ENCODE measurements at regions of chr4 and their contacts with region 1.

Region 1: DNA sequence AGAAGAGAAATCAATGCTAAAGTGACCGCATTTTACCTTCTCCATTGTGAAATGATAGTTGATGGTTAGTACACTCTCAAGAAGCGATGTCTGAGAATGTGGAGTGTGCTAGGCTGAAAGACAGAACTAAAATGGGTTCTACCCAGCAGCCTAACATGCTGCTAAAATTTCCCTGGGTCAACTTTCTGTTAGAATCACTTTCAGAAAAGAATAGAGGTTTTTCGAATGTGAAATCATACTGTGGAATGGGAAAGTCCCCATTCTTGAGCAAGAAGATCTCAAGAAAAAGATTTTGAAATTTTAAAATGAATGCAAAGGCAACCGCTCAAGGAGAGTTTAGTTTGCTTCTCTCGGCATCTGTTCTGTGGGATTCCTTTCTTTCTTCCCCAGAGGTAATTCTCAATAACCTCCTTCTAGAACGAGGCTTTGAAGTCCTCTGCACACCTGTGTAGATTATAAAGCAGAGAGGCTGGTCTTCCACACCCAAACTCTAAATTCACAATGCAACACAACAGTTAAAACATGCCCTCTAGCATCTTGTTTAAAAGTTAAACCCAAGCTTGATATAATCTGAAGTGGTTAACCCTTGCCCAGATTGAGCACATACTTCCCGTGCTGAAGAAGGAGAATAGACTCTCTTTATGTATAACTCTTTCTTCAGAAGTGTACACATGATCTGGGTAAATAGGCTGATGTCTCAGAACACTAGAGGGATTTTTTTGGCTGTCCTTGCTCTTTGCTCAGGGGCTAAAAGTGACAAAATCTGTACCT is 208.7 kb upstream of the KLF3 start:
- DNase-seq: no peak
- H3K4me3 Mint-ChIP-seq: peak overlapping the region; percentile 16
- H3K27ac Mint-ChIP-seq: peak overlapping the region; percentile 45
- H3K4me1 Mint-ChIP-seq: peaks cover 46% of the 10 kb centered on the region
- H3K27me3 Mint-ChIP-seq: peaks cover 4% of the 10 kb centered on the region

Region 2: DNA sequence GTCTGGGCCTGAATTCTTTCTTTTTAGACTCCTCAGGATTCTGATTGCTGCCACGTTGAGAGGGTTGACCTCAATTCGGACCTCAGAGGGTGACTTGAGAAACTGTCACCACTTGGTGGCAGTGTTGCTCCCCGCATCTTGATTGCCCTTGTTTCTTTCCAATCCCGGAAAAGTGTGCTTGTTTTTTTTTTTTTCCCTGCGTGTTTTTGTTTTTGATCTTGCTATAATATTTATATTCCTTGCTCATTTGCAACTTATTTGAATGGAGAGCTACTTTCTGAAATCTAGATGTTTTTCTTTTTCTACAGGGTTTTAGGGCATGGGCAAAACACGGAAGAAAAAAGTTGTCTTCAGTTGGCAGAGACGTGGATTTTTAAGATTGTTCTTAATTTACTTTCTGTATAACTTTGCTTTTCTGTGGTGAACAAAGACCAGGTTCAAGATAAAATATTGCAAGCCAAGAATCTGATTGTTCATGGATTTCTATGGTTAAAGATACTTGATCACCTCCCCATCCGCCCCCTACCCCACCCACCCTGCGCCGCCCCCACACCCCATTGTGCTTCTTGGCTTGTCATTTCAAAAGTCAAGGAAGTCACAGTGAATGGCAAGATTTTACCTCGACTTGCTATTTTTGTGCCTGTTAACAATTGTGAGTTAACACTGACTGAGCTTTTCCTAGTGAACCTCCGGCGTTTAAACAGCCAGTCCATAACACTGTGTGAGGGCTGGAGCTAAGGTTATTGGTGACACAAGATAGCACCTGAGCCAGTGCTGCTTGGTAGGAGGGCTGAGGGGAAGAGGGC is 393.0 kb before region 1 on chr4:
- intact Hi-C with region 1: loop called (anchors 10 kb)
- DNase-seq: peak; percentile 42
- H3K4me3 Mint-ChIP-seq: peak overlapping the region; percentile 83
- H3K27ac Mint-ChIP-seq: peak overlapping the region; percentile 69
- H3K4me1 Mint-ChIP-seq: peaks cover 16% of the 10 kb centered on the region
- H3K27me3 Mint-ChIP-seq: no peaks in the 10 kb centered on the region

Region 3: DNA sequence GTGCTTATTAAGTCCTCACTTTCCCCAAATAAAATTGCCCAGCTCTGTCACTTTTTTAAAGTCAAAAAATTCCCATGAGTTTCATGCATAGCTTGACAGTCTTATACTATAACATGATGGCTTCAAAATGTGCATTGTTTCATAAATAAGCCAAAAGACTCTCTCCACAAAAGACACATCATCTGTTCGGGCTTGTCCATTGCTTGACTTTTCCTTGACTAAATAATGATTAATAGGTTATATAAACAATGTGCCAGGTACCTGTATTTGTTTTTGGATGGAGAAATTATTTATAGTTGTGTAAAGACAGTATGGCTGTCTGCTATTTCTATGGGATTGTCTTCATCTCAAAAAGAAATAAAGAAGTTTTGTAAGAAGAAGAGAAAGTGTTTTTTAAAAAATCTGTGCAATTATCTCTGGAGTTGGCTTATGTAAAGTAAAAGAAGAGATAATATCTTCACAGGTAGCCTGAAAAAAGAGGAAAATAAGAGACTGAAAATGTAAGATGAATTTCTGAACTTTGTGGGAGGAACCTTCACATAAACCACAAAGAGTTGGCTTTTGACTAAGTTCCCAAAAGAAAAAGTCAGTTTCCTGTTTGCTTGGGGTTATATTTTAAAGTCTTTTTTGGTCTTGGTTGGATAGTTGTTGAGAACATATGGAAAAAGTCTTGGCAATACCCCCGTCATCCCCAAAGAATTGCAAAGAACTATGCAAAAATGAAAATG is 120.3 kb before region 1 on chr4:
- intact Hi-C with region 1: loop called (anchors 1 kb)
- DNase-seq: no peak
- H3K4me3 Mint-ChIP-seq: peak overlapping the region; percentile 22
- H3K27ac Mint-ChIP-seq: peak overlapping the region; percentile 55
- H3K4me1 Mint-ChIP-seq: peaks cover 32% of the 10 kb centered on the region
- H3K27me3 Mint-ChIP-seq: peaks cover 42% of the 10 kb centered on the region

Region 4: GRCh38 chr4:38529189-38530115 is 74.2 kb after region 1 on chr4:
- intact Hi-C with region 1: loop called (anchors 1 kb)
- DNase-seq: peak; percentile 44
- H3K4me3 Mint-ChIP-seq: peak overlapping the region; percentile 67
- H3K27ac Mint-ChIP-seq: peak overlapping the region; percentile 95
- H3K4me1 Mint-ChIP-seq: peaks cover 41% of the 10 kb centered on the region
- H3K27me3 Mint-ChIP-seq: peaks cover 21% of the 10 kb centered on the region

Region 5: GRCh38 chr4:38663801-38664705 is 208.8 kb after region 1 on chr4 and contains the start of gene KLF3:
- intact Hi-C with region 1: loop called (anchors 2 kb)
- DNase-seq: peak; percentile 86
- H3K4me3 Mint-ChIP-seq: peak within 1 kb of the TSS; percentile 85
- H3K27ac Mint-ChIP-seq: peak within 1 kb of the TSS; percentile 53
- H3K4me1 Mint-ChIP-seq: peaks cover 55% of the 10 kb centered on the region
- H3K27me3 Mint-ChIP-seq: peaks cover 24% of the 10 kb centered on the region
- total RNA-seq, gene KLF3: 1.8 and 1.9 TPM in 2 replicates

Region 6: DNA sequence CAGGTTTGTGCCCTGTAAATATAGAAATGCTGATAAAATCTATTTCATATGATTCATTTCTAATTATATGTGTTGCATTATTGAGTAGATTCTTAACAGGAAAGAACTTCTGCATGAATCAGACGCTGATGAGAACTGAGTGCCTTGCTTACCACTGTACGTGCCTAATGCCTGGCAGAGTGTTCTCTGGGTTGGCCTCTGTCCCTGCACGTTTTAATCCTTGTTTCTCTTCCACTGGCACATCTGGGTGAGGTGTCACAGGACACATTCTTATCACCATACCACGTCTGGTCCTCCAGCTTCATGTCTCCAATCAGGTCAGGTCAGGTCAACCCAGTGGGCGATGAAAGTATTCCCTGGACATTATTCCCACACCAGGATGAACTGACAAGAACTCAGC is 262.3 kb after region 1 on chr4:
- intact Hi-C with region 1: no loop called
- DNase-seq: no peak
- H3K4me3 Mint-ChIP-seq: no peak overlapping the region
- H3K27ac Mint-ChIP-seq: no peak overlapping the region
- H3K4me1 Mint-ChIP-seq: no peaks in the 10 kb centered on the region
- H3K27me3 Mint-ChIP-seq: peaks cover 14% of the 10 kb centered on the region